ENCODE measurements at regions of chr12 and their contacts with region 1.

Region 1: GRCh38 chr12:10153271-10154144 is 18.4 kb downstream of the OLR1 start:
- DNase-seq: peak; percentile 30
- H3K4me3 Mint-ChIP-seq: peak overlapping the region; percentile 83
- H3K27ac Mint-ChIP-seq: no peak overlapping the region
- H3K4me1 Mint-ChIP-seq: peaks cover 5% of the 10 kb centered on the region
- H3K27me3 Mint-ChIP-seq: peaks cover 44% of the 10 kb centered on the region

Region 2: DNA sequence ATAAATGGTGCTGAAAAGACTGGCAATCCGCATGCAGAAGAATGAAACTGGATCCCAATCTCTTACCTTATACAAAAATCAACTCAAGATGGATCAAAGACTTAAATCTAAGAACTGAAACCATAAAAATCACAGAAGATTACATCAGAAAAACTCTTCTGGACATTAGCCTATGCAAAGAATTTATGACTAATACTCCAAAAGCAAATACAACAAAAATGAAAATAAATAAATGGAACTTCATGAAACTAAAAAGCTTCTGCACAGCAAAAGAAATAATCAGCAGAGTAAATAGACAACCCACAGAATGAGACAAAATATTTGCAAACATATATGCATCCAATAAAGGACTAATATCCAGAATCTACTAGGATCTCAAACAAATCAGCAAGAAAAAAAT is 40.4 kb before region 1 on chr12:
- intact Hi-C with region 1: no loop called
- DNase-seq: no peak
- H3K4me3 Mint-ChIP-seq: no peak overlapping the region
- H3K27ac Mint-ChIP-seq: no peak overlapping the region
- H3K4me1 Mint-ChIP-seq: no peaks in the 10 kb centered on the region
- H3K27me3 Mint-ChIP-seq: peaks cover 7% of the 10 kb centered on the region

Region 3: DNA sequence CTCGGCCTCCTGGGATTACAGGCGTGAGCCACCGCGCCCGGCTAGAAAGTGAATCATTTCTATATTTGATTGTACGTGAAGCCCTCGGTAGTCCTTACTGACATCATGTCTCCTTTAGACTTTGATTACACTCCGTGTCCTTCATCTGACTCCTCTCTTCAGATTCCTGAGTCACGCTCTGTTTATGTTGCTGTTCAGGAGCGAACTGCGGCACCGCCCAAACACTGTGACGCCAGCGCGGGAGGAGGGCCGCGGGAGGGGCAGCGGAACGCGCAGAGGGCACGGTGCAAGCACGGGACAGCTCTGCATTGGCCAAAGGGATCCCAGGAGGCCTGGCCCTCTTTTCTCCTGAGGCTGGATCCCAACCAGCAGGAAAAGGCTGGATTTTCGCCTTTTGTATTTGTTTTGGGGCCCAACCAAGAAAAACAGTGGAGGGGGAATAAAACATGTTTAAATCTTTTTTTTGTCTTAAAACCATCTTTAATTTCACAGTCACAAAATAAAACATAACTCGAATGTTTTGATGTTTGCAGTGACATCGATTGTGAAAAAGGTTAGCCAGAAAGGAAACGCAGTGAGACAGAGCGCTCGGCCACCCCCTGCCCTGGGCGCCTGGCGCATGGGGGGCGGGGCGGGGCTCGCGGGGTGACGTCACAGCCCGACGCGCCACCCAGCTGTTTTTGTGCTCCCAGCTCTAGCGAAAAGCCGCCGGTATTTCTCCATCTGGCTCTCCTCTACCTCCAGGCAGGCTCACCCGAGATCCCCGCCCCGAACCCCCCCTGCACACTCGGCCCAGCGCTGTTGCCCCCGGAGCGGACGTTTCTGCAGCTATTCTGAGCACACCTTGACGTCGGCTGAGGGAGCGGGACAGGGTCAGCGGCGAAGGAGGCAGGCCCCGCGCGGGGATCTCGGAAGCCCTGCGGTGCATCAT is 59.0 kb after region 1 on chr12 and contains the start of gene GABARAPL1:
- intact Hi-C with region 1: loop called (anchors 2 kb)
- DNase-seq: peak; percentile 76
- H3K4me3 Mint-ChIP-seq: peak within 1 kb of the TSS; percentile 84
- H3K27ac Mint-ChIP-seq: peak within 1 kb of the TSS; percentile 93
- H3K4me1 Mint-ChIP-seq: peaks cover 32% of the 10 kb centered on the region
- H3K27me3 Mint-ChIP-seq: peaks cover 23% of the 10 kb centered on the region
- total RNA-seq, gene GABARAPL1: 5.0 and 6.6 TPM in 2 replicates

Region 4: GRCh38 chr12:10562306-10562933 is 408.9 kb after region 1 on chr12:
- intact Hi-C with region 1: loop called (anchors 1 kb)
- DNase-seq: no peak
- H3K4me3 Mint-ChIP-seq: no peak overlapping the region
- H3K27ac Mint-ChIP-seq: no peak overlapping the region
- H3K4me1 Mint-ChIP-seq: peaks cover 4% of the 10 kb centered on the region
- H3K27me3 Mint-ChIP-seq: peaks cover 38% of the 10 kb centered on the region

Region 5: GRCh38 chr12:10749700-10750384 is 596.3 kb after region 1 on chr12:
- intact Hi-C with region 1: loop called (anchors 5 kb)
- DNase-seq: peak; percentile 66
- H3K4me3 Mint-ChIP-seq: peak overlapping the region; percentile 62
- H3K27ac Mint-ChIP-seq: peak overlapping the region; percentile 34
- H3K4me1 Mint-ChIP-seq: peaks cover 36% of the 10 kb centered on the region
- H3K27me3 Mint-ChIP-seq: peaks cover 24% of the 10 kb centered on the region